Activated naive CD4-positive, alpha-beta T cell treated with anti-CD3 and anti-CD28 coated beads for 36 hours (primary cell): ENCODE measurements at regions of chr14 and their contacts with region 1.

Region 1: GRCh38 chr14:22039938-22040775 is 366.5 kb upstream of the OR4E1 start:
- DNase-seq: peak; percentile 70
- H3K4me3 Mint-ChIP-seq: peak overlapping the region; percentile 69
- H3K27ac Mint-ChIP-seq: peak overlapping the region; percentile 90
- H3K4me1 Mint-ChIP-seq: peaks cover 16% of the 10 kb centered on the region
- H3K27me3 Mint-ChIP-seq: no peaks in the 10 kb centered on the region

Region 2: GRCh38 chr14:22002860-22003309 is 37.3 kb before region 1 on chr14:
- CTCF ChIA-PET with region 1: interaction called, 8 read pairs
- intact Hi-C with region 1: loop called (anchors 1 kb)
- DNase-seq: peak; percentile 86
- H3K4me3 Mint-ChIP-seq: peak overlapping the region; percentile 77
- H3K27ac Mint-ChIP-seq: peak overlapping the region; percentile 90
- H3K4me1 Mint-ChIP-seq: peaks cover 26% of the 10 kb centered on the region
- H3K27me3 Mint-ChIP-seq: no peaks in the 10 kb centered on the region

Region 3: GRCh38 chr14:22084393-22085281 is 44.5 kb after region 1 on chr14:
- CTCF ChIA-PET with region 1: no interaction called
- intact Hi-C with region 1: no loop called
- DNase-seq: peak; percentile 31
- H3K4me3 Mint-ChIP-seq: peak overlapping the region; percentile 46
- H3K27ac Mint-ChIP-seq: peak overlapping the region; percentile 84
- H3K4me1 Mint-ChIP-seq: peaks cover 25% of the 10 kb centered on the region
- H3K27me3 Mint-ChIP-seq: no peaks in the 10 kb centered on the region

Region 4: GRCh38 chr14:22122227-22122818 is 82.2 kb after region 1 on chr14:
- CTCF ChIA-PET with region 1: no interaction called
- intact Hi-C with region 1: no loop called
- DNase-seq: peak; percentile 39
- H3K4me3 Mint-ChIP-seq: peak overlapping the region; percentile 79
- H3K27ac Mint-ChIP-seq: peak overlapping the region; percentile 93
- H3K4me1 Mint-ChIP-seq: peaks cover 20% of the 10 kb centered on the region
- H3K27me3 Mint-ChIP-seq: no peaks in the 10 kb centered on the region

Region 5: GRCh38 chr14:22140633-22141032 is 100.5 kb after region 1 on chr14:
- CTCF ChIA-PET with region 1: no interaction called
- intact Hi-C with region 1: no loop called
- DNase-seq: no peak
- H3K4me3 Mint-ChIP-seq: no peak overlapping the region
- H3K27ac Mint-ChIP-seq: no peak overlapping the region
- H3K4me1 Mint-ChIP-seq: no peaks in the 10 kb centered on the region
- H3K27me3 Mint-ChIP-seq: no peaks in the 10 kb centered on the region

Region 6: DNA sequence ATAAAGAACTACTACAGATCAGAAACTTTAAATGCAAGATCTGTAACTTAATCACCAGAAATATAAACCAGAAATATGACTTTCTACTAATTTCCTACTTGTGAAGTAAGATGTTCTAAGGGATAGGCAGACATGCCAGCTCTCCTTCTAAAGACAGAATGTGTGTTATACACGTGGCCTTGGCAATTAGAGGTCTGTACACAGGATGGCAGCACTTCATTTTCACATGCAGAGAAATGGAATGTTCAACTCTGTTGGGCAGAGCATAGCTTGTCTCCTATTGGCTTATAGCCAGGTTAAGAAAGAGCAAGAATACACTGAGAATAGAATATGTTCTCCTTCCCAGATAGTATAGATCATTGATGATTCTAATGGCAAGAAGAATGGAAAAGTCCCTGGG is 145.0 kb after region 1 on chr14:
- CTCF ChIA-PET with region 1: no interaction called
- intact Hi-C with region 1: no loop called
- DNase-seq: no peak
- H3K4me3 Mint-ChIP-seq: no peak overlapping the region
- H3K27ac Mint-ChIP-seq: no peak overlapping the region
- H3K4me1 Mint-ChIP-seq: no peaks in the 10 kb centered on the region
- H3K27me3 Mint-ChIP-seq: no peaks in the 10 kb centered on the region